Posterior cingulate gyrus (tissue), 11 donors: ENCODE measurements at regions of chr7 and their contacts with region 1.

Region 1: GRCh38 chr7:117312598-117313580 is 10.0 kb downstream of the WNT2 start:
- DNase-seq: no peak

Region 2: DNA sequence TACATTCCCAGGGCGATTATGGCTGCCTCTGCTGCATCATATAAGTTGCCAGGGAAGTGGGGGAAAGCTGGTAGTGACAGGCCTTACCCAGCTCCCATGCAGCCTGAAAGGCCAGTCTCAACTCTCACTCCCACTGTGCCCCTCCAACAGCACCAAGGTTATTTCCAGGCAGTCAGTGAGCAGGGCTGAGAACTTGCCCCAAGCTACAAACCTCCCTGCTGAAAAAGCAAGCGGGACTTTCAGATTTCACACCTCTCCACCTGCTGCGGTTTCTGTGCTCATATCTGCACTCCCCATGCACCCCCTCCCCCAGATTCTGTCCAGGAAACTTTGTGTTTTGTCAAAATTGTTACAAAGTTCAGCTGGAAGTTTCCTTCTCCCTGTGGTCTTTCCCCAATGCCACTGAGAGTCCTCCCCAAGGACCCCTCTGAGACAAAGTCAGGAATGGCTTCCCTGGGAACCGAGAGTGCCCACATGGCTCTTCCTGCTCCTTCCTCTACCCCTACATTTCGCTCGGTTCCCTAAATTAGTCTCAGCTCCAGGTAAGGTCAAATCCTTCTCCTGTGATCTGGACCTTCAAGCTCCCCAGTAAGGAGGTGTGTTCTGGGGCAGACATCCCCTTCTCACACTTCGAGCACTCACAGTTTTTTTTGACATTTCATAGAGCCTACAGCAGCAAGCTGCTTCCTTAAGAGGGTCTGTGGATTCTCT is 35.2 kb after region 1 on chr7:
- intact Hi-C with region 1: no loop called
- DNase-seq: no peak

Region 3: GRCh38 chr7:117375380-117375779 is 62.5 kb after region 1 on chr7:
- intact Hi-C with region 1: loop called (anchors 2 kb)
- DNase-seq: no peak